ENCODE measurements at regions of chr22 and their contacts with region 1.

Region 1: GRCh38 chr22:50705851-50706351 is 32.1 kb upstream of the ACR start:
- DNase-seq: peak in 1 of 2 donors; percentile 33
- ATAC-seq: no peak
- H3K4me3 ChIP-seq: no peak overlapping the region
- H3K27ac ChIP-seq: no peak overlapping the region
- H3K4me1 ChIP-seq: no peaks in the 10 kb centered on the region
- H3K27me3 ChIP-seq: no peaks in the 10 kb centered on the region
- CTCF ChIP-seq: no peak

Region 2: DNA sequence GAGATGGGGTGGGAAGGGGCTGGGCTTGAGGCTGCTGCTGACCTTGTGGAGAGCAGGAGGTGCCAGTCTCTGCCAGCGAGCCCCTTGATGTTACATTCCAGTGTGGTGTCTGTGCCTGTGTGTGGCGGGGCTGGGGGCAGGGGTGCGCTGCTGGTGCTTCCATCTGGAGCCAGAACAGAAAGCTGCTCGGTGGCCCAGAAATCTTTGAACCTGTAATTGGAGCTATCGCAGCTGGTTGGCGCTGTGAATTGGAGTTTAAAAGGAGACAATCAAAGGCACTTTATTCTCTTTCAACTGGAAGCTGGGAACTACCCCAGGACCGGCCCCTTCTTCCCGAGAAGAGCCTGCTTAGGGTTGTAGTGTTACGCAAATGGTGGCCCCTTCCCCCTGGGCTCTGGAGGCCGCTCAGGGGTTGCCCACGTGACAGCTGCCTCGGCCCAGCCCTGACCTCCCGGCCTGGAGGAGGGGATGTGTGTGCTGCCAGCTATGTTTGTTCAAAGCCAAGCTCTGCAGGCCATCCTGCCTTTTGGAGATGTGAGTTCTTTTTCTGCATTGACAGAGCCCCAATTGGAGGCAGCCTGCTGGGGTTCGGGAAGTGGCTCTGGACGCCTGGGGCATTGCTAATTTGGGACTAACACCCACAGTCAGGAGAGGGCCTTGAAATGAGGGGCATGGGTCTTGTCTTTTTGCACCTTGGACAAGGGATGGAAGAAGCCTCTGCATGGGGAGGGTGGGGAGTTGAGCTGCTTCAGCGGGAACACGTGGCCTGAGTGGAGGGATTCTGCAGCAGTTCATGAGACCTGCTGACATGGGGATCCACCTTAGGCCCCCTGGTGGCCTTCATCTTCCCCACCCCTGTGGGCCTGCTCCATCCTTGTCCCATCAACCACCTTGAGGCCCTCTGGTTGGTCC is 63.9 kb before region 1 on chr22:
- intact Hi-C with region 1: loop called in 1 of 2 experiments (anchors 2 kb)
- DNase-seq: no peak
- ATAC-seq: peak in 3 of 4 donors; percentile 35 to 46 (median 39)
- H3K4me3 ChIP-seq: no peak overlapping the region
- H3K27ac ChIP-seq: no peak overlapping the region
- H3K4me1 ChIP-seq: no peaks in the 10 kb centered on the region
- H3K27me3 ChIP-seq: peaks cover 0 to 43% (median 6%) of the 10 kb centered on the region in 3 donors
- CTCF ChIP-seq: no peak

Measured in psoas muscle (tissue), 8 donors.